ENCODE measurements at regions of chr12 and their contacts with region 1.

Region 1: DNA sequence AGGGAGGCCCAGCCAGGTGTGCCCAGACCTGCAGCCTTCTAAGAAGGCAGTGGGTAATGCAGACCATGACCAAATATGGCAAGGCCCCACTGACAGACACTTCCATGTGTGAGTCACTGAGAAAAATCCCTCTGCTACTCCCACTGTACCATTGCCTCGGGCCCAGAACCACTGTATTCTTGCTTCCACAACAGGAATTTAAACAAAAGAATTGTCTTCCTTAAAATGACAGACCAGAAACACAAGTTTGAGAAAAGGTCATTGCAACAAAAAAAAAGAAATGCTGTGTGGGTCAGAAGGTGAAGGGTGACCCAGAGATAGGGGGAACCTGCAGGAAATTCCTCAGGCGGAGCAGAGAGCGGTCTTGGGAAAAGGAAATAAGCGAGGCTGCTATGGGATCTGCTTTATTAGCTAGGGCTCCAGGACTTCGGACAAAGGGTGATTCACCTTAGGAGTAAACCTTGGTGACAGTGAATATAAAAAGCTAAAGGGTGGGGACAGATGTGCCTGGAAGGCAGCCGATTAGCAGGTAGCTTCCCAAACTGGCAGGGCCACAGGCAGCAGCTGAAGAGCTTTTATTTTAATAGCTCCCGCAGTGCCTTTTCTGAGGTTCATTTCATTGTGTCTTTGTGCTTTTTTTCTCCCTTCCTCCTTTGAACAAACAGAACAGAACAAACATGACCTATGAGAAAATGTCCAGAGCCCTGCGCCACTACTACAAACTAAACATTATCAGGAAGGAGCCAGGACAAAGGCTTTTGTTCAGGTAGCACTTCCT is 185.3 kb upstream of the BCL2L14 start:
- DNase-seq: no peak
- ATAC-seq: peak; percentile 53
- H3K4me3 ChIP-seq: no peak overlapping the region
- H3K27ac ChIP-seq: no peak overlapping the region
- H3K4me1 ChIP-seq: no peaks in the 10 kb centered on the region
- H3K27me3 ChIP-seq: no peaks in the 10 kb centered on the region

Region 2: GRCh38 chr12:11812586-11813427 is 72.6 kb before region 1 on chr12:
- intact Hi-C with region 1: loop called in 1 of 2 experiments (anchors 5 kb)
- DNase-seq: peak in 1 of 2 donors; percentile 72
- ATAC-seq: peak; percentile 68
- H3K4me3 ChIP-seq: peak overlapping the region in 1 of 2 donors; percentile 3
- H3K27ac ChIP-seq: peak overlapping the region in 1 of 2 donors; percentile 69
- H3K4me1 ChIP-seq: peaks cover 0 to 4% of the 10 kb centered on the region in 2 donors
- H3K27me3 ChIP-seq: no peaks in the 10 kb centered on the region

Region 3: DNA sequence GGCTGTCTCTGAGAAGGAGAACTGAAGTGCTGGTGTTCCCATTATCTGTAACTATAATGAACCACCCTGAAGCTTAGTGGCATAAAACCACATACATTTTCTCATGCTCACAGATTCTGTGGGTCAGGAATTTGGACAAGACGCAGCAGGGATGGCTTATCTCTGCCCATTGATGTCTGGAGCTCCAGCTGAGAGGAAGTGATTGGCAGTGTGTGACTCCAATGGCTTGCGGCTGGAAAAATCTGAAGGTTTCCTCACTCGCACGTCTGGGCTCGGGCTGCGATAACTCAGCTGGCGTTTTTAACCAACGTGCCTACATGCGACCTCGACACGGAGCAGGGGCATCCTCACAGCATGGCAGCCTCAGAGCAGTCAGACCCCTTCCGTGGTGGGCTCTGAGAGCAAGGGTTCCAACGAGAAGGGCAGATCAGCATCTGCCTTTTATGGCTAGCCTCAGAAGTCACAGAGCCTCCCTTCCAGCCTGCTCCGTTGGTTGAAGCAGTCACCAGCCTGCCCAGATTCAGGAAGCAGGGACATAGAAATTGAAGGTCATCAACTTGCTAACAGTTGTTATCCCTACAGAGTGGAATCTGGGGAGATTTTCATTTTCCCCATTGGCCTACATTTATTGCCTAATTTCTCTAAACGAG is 42.0 kb after region 1 on chr12:
- intact Hi-C with region 1: no loop called
- DNase-seq: no peak
- ATAC-seq: no peak
- H3K4me3 ChIP-seq: no peak overlapping the region
- H3K27ac ChIP-seq: no peak overlapping the region
- H3K4me1 ChIP-seq: no peaks in the 10 kb centered on the region
- H3K27me3 ChIP-seq: no peaks in the 10 kb centered on the region

Measured in aorta (tissue), 5 donors.